Caco-2 (cell line): ENCODE measurements at regions of chr12 and their contacts with region 1.

Region 1: DNA sequence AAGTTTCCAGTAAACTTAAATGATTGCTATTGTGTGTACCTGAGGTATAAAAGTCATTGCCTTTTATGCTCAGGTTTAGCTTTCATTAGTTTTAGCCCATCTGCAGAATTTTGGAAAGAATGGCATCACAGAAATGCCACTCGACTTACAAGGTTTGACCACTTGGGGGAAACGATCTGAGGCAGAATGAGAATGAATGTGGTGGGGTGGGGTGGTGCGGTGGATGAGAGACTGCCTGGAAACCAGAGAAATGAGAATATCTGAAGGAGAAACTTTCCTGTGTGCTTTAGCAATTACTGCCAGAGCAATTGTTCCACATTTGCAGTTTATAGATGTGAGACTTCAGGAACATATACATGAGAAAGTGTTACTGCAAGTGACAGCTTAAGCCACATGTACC is 225.4 kb upstream of the PDE3A start:
- DNase-seq: no peak
- H3K4me3 ChIP-seq: no peak overlapping the region
- H3K4me3 Mint-ChIP-seq: no peak overlapping the region
- H3K27ac Mint-ChIP-seq: no peak overlapping the region
- H3K4me1 ChIP-seq: no peaks in the 10 kb centered on the region
- H3K4me1 Mint-ChIP-seq: no peaks in the 10 kb centered on the region
- H3K27me3 ChIP-seq: no peaks in the 10 kb centered on the region
- H3K27me3 Mint-ChIP-seq: peaks cover 3% of the 10 kb centered on the region
- CTCF ChIP-seq: peak in 1 of 2 experiments; percentile 13

Region 2: GRCh38 chr12:20194171-20194570 is 51.2 kb after region 1 on chr12:
- CTCF ChIA-PET with region 1: no interaction called
- POLR2A ChIA-PET with region 1: no interaction called
- intact Hi-C with region 1: loop called (anchors 1 kb)
- DNase-seq: peak; percentile 49 to 62
- H3K4me3 ChIP-seq: no peak overlapping the region
- H3K4me3 Mint-ChIP-seq: no peak overlapping the region
- H3K27ac Mint-ChIP-seq: no peak overlapping the region
- H3K4me1 ChIP-seq: peaks cover 11% of the 10 kb centered on the region
- H3K4me1 Mint-ChIP-seq: peaks cover 20% of the 10 kb centered on the region
- H3K27me3 ChIP-seq: no peaks in the 10 kb centered on the region
- H3K27me3 Mint-ChIP-seq: no peaks in the 10 kb centered on the region
- CTCF ChIP-seq: peak; percentile 44 to 69